Cardiac septum (tissue), 1 donor: ENCODE measurements at regions of chr15 and their contacts with region 1.

Region 1: DNA sequence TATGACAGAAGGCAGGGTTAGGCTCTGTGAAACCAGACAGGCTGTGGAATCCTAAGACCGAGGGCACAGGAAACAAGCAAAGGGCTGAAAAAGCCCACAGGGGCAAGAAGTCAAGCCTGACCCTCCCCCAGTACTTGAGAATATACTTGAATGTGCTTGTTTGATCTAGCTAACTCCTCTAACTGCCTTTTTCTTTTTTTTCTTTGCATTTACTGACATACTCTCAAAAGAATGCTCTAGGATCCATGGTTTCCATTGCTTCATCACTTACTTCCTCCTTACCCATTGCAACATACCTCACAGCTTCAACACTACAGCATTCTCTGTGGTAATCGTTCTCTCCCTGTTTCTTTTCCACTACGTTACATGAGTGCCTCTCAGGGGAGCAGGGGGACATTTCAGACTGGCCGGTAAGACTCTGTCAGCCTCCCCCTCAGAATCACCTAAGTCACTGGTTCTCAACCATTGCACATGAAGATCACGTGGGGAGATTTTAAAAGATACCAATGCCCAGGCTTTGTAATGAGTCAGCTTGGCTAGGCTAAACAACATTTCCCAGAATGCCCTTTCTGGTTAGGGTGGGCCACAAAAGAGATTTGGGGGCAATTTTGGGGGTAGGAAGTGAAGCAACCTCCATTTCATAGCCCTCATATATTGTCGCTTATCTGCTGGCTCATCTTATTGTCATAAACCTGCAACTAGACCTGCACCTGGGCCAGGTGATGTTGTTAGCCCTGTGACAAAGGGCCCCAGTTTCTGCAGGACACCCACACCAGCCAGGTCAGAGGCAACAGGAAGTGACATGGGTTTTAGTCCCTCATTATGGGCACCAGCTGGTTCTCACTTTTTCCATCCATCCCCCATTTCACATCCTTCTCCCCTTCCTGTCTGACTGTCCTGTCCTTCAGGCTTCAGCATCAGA is 24.6 kb upstream of the RSL24D1 start:
- DNase-seq: no peak

Region 2: DNA sequence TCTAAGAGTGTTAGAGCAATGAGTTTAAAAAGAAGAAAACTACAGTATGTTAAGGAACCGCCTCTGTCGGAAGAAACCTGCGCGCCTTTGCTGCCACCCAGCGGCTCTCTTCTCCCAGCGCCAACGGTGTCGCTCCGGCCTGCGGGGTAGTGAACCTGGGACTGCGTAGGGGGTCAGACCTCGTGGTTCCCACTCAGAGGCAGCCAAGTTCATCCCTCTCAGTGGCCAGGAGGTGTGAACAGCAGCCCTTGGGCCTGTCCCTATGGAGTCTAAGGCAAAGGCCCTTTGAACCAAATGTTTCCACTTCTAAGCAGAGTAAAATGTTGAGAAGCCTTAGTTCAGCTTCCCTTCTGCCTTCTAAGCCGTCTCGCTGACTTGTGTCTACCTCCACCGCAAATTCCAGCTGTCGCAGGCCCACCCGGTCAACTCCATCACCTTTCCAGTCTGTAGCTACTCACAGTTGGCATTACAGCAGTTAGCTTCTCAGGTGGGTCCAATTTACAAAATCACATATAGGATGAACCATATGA is 69.2 kb after region 1 on chr15:
- intact Hi-C with region 1: loop called (anchors 1 kb)
- DNase-seq: peak; percentile 94

Region 3: GRCh38 chr15:55434989-55435825 is 213.9 kb after region 1 on chr15:
- intact Hi-C with region 1: loop called (anchors 5 kb)
- DNase-seq: no peak